ENCODE measurements at regions of chr2 and their contacts with region 1.

Region 1: DNA sequence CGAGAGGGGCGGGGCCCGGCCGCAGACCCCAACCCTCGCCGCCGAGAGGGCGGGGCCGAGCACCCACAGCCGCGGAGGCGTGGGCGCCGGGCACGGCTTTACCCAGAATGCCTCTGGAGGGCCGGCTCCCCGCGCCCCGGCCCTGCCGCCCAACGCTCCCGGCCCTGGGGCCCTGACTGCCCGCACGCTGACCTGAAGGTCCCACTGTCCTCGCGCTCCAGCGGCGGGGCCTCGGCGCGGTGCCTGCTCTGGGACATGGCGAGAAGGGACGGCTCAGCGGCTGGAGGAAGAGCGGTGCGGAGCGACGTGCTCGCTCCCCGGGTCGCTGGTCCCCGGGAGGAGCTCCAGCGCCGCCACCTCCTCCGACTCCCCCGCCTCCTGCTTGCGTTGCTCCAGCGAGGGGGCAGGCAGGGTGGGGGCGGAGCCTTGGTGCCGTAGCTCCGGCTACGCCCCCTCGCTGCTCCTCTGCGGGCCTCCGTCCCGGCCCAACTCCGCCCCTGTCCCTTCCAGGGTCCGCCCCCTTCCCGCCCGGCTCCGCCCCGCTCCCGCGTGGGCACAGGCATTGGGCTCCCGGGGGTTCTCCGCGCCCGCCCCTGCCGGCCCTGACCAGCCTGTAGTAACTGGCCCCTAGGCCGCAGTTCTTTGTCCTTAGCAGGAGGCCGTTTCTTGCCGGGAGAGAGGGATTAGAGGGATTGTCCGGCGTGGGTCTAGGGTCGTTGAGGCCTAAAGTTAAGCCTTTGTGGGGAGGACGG is at the starts of genes PJVK and PRKRA:
- DNase-seq: peak; percentile 97
- H3K4me3 ChIP-seq: peak within 1 kb of the TSS; percentile 70 to 95 (median 88)
- H3K27ac ChIP-seq: peak within 1 kb of the TSS; percentile 90 to 99 (median 97)
- H3K4me1 ChIP-seq: peaks cover 17 to 41% (median 32%) of the 10 kb centered on the region in 4 donors
- H3K27me3 ChIP-seq: no peaks in the 10 kb centered on the region
- CTCF ChIP-seq: no peak
- EP300 ChIP-seq: no peak
- POLR2A ChIP-seq: peak; percentile 87
- total RNA-seq, gene PJVK: 1.4 to 5.8 (median 2.1) TPM
- total RNA-seq, gene PRKRA: 74.5 to 90.9 (median 75.7) TPM

Region 2: DNA sequence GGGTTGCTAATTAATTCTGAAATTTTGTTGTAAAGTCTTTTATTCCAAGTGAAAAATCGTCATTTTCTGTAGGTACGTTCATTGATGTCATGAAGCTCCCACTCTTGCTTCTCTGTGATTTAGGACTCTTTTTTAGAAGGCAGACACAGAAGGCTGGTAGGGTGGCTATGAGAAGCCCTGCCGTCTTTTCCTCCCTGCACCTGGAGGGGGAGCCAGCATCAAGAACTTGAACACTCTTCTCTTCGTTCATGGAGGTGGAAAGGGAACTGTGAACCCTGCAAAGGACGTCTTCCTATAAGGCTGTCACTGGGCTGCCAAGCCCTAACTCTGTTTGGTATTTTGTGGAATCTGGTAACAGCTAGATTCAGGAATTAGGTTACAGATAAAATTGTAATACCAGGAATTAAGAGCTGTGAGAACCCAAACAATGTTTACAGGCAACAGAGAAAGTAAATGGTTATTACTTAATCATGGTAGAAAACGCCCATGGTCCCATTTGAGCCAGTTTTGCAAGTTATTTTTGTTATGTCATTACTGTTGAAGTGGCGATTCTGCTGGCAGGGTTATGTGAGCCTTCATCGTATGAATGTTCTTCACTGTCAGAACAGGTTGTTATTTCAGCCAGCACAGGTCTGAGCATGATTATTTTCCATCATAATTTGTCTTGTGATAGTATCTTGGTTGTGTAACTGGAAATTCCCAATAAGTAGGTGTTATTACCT is 144.4 kb before region 1 on chr2:
- intact Hi-C with region 1: no loop called
- DNase-seq: no peak
- H3K4me3 ChIP-seq: no peak overlapping the region
- H3K27ac ChIP-seq: no peak overlapping the region
- H3K4me1 ChIP-seq: no peaks in the 10 kb centered on the region
- H3K27me3 ChIP-seq: no peaks in the 10 kb centered on the region
- CTCF ChIP-seq: peak in 1 of 3 experiments; percentile 32
- EP300 ChIP-seq: no peak
- POLR2A ChIP-seq: no peak

Region 3: DNA sequence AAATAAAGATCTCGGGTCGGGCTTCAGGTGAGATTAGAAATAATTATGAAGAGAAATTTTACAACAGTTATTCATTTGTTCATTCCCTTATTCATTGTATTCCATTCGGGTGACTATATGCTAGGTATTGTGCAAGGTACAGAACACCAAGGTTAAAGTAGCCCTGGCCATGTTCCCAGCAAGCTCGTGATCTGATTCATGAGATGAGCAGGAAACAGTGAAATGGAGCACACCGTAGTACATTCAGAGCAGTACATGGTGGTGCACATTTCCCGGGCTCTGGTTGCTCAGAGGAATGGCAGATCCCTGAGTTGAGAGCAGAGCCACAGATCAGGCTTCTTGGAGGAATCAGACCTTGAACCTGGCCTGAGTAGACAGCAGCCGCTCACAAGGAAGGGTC is 87.7 kb before region 1 on chr2:
- intact Hi-C with region 1: no loop called
- DNase-seq: no peak
- H3K4me3 ChIP-seq: no peak overlapping the region
- H3K27ac ChIP-seq: no peak overlapping the region
- H3K4me1 ChIP-seq: no peaks in the 10 kb centered on the region
- H3K27me3 ChIP-seq: no peaks in the 10 kb centered on the region
- CTCF ChIP-seq: no peak
- EP300 ChIP-seq: no peak
- POLR2A ChIP-seq: no peak

Region 4: GRCh38 chr2:178478439-178479274 is 27.7 kb after region 1 on chr2 and contains the start of gene FKBP7:
- intact Hi-C with region 1: loop called (anchors 2 kb)
- DNase-seq: peak; percentile 93
- H3K4me3 ChIP-seq: peak within 1 kb of the TSS; percentile 66 to 84 (median 80)
- H3K27ac ChIP-seq: peak within 1 kb of the TSS; percentile 93 to 96 (median 96)
- H3K4me1 ChIP-seq: peaks cover 47 to 70% (median 60%) of the 10 kb centered on the region in 4 donors
- H3K27me3 ChIP-seq: no peaks in the 10 kb centered on the region
- CTCF ChIP-seq: peak; percentile 56 to 83 (median 62)
- EP300 ChIP-seq: peak; percentile 60
- POLR2A ChIP-seq: peak; percentile 8
- total RNA-seq, gene FKBP7: 13.3 to 15.0 (median 14.7) TPM

Region 5: GRCh38 chr2:178522950-178523595 is 72.1 kb after region 1 on chr2:
- intact Hi-C with region 1: loop called (anchors 10 kb)
- DNase-seq: peak; percentile 94
- H3K4me3 ChIP-seq: peak overlapping the region; percentile 55 to 73 (median 70)
- H3K27ac ChIP-seq: peak overlapping the region; percentile 75 to 83 (median 78)
- H3K4me1 ChIP-seq: peaks cover 0 to 13% (median 10%) of the 10 kb centered on the region in 4 donors
- H3K27me3 ChIP-seq: no peaks in the 10 kb centered on the region
- CTCF ChIP-seq: peak; percentile 62 to 79 (median 77)
- EP300 ChIP-seq: no peak
- POLR2A ChIP-seq: no peak

Region 6: GRCh38 chr2:178679891-178680290 is 228.9 kb after region 1 on chr2:
- intact Hi-C with region 1: no loop called
- DNase-seq: no peak
- H3K4me3 ChIP-seq: no peak overlapping the region
- H3K27ac ChIP-seq: no peak overlapping the region
- H3K4me1 ChIP-seq: no peaks in the 10 kb centered on the region
- H3K27me3 ChIP-seq: no peaks in the 10 kb centered on the region
- CTCF ChIP-seq: no peak
- EP300 ChIP-seq: no peak
- POLR2A ChIP-seq: no peak